ENCODE measurements at regions of chr14 and their contacts with region 1.

Region 1: DNA sequence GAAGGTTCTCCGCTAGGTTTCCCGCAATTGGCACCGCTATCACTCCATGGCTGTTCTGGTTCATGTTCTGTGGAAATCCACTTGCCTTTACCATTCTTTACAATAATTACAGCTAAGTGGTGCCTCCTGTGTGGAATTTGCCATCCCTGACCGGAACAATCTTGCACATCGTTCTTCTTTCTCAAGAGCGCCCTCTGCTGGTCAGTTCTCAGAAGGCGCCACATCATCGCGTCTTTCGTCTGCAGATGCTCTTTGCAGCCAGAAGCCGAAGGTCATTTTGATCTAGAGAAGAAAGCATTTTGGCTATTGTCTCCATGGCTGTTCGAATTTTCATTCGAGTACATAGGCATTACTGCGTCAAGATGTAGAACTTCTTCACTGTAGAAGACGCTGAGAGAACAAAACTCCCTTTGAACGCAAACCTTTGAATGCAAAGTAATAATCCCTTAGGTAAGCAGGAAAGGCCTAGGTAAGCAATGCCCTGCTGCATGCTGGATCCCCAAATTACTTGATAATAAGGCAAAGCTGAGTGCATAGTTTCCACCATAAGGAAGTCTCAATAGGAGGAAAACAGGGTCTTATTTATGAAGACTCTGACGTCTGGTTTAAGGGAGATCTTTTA is 10.1 kb upstream of the RTRAF start:
- DNase-seq: peak; percentile 87
- H3K4me3 Mint-ChIP-seq: no peak overlapping the region
- H3K27ac Mint-ChIP-seq: no peak overlapping the region
- H3K4me1 Mint-ChIP-seq: peaks cover 12% of the 10 kb centered on the region
- H3K27me3 Mint-ChIP-seq: peaks cover 11% of the 10 kb centered on the region

Region 2: GRCh38 chr14:51828017-51828797 is 151.0 kb before region 1 on chr14:
- CTCF ChIA-PET with region 1: interaction called, 16 read pairs
- DNase-seq: peak; percentile 75
- H3K4me3 Mint-ChIP-seq: no peak overlapping the region
- H3K27ac Mint-ChIP-seq: no peak overlapping the region
- H3K4me1 Mint-ChIP-seq: no peaks in the 10 kb centered on the region
- H3K27me3 Mint-ChIP-seq: peaks cover 4% of the 10 kb centered on the region

Region 3: DNA sequence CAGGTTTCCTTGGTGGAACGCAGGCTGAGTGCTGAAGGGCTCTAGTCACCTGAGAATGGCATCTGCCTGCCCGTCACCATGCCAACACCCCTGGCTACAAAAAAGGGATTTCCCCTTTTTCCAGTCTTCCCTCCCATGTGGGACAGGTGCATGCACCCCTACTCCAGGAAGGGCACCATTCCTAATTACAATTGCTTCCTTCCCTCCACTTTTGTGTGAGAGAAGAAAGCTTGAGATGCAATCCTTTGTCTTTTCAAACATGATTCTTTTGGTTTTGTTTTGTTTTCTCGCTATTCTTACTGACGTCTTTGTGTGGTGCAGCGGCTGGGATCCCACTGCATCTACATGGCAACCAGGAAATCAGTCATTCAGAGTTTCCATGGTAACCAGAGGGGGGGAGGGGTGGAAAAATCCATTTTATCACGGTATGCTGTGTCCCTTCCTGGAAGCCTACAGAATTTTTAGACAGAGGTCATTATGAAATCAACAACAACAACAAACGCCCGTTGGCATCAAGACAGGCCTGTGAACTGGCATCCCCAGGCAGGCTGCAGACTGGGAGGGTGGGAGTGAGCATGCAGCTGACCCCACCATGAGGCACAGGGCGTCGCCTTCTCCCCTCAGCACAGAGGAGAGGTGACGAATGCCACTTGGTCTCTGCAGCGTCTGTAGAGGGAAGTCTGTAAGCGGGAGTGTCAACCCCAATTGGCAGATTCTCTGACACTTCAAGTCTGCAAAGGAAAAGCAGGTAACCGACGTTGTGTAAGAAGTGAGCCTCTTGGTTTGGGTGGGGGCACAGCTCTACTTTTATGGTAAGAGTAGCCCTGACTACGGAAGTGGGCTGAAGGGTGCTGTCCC is 132.3 kb before region 1 on chr14:
- CTCF ChIA-PET with region 1: interaction called, 10 read pairs
- DNase-seq: peak; percentile 93
- H3K4me3 Mint-ChIP-seq: peak overlapping the region; percentile 68
- H3K27ac Mint-ChIP-seq: peak overlapping the region; percentile 98
- H3K4me1 Mint-ChIP-seq: peaks cover 64% of the 10 kb centered on the region
- H3K27me3 Mint-ChIP-seq: no peaks in the 10 kb centered on the region

Region 4: DNA sequence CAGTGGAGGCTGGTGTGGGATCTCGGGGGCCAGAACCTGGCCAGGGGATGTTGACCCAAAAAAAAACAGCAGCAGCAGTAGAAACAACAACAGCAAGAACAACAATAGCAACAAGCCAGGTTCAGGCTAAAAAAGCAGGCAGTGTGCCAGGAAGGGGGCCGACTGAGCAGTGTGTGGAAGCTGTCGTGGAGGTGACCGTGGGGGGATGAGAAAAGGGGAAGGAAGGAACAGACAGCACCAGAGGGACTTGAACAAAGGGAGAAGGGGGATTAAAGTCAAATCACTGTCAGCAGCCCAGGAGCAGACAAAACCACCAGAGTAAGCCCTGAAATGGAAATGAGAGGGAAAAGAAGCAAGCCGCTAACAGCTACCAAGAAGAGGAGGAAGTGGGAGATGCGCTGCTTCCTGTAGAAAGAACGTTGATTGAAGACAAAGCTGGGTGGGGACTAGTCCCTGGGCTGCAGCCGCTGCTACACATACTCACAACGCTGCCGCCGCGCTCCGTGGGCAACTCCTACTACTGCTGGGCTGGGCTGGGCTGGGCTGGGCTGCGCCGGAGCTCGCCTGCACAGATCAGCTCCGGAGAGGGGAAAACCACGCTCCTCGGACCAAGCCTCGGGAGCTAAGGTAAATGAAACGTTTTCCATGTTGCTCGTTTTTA is 118.9 kb before region 1 on chr14 and contains the start of gene GNG2:
- CTCF ChIA-PET with region 1: interaction called, 16 read pairs
- DNase-seq: peak; percentile 91
- H3K4me3 Mint-ChIP-seq: peak within 1 kb of the TSS; percentile 83
- H3K27ac Mint-ChIP-seq: peak within 1 kb of the TSS; percentile 93
- H3K4me1 Mint-ChIP-seq: peaks cover 57% of the 10 kb centered on the region
- H3K27me3 Mint-ChIP-seq: no peaks in the 10 kb centered on the region

Region 5: GRCh38 chr14:52052288-52052943 is 73.2 kb after region 1 on chr14:
- CTCF ChIA-PET with region 1: no interaction called
- DNase-seq: no peak
- H3K4me3 Mint-ChIP-seq: no peak overlapping the region
- H3K27ac Mint-ChIP-seq: no peak overlapping the region
- H3K4me1 Mint-ChIP-seq: no peaks in the 10 kb centered on the region
- H3K27me3 Mint-ChIP-seq: peaks cover 42% of the 10 kb centered on the region